Activated T-helper 1 cell treated with anti-CD3 and anti-CD28 coated beads, Interleukin-12 subunit alpha, Interleukin-12 subunit beta, Interleukin-2, Interleukin-4 antibody, amounts not matched to agents 30 ng/mL and 10 ng/mL and 1 ng/mL, durations not matched to agents 14 hours and 24 hours and 36 hours (primary cell): ENCODE measurements at regions of chr5 and their contacts with region 1.

Region 1: GRCh38 chr5:10353241-10354047 is at the start of gene MARCHF6:
- DNase-seq: peak; percentile 89
- H3K4me3 Mint-ChIP-seq: peak within 1 kb of the TSS; percentile 100
- H3K27ac Mint-ChIP-seq: peak within 1 kb of the TSS; percentile 100
- H3K4me1 Mint-ChIP-seq: peaks cover 48% of the 10 kb centered on the region
- H3K27me3 Mint-ChIP-seq: no peaks in the 10 kb centered on the region
- total RNA-seq, gene MARCHF6: 98.8 and 109 TPM in 2 replicates

Region 2: GRCh38 chr5:10124287-10124686 is 229.2 kb before region 1 on chr5:
- intact Hi-C with region 1: no loop called
- DNase-seq: no peak
- H3K4me3 Mint-ChIP-seq: no peak overlapping the region
- H3K27ac Mint-ChIP-seq: no peak overlapping the region
- H3K4me1 Mint-ChIP-seq: no peaks in the 10 kb centered on the region
- H3K27me3 Mint-ChIP-seq: no peaks in the 10 kb centered on the region

Region 3: DNA sequence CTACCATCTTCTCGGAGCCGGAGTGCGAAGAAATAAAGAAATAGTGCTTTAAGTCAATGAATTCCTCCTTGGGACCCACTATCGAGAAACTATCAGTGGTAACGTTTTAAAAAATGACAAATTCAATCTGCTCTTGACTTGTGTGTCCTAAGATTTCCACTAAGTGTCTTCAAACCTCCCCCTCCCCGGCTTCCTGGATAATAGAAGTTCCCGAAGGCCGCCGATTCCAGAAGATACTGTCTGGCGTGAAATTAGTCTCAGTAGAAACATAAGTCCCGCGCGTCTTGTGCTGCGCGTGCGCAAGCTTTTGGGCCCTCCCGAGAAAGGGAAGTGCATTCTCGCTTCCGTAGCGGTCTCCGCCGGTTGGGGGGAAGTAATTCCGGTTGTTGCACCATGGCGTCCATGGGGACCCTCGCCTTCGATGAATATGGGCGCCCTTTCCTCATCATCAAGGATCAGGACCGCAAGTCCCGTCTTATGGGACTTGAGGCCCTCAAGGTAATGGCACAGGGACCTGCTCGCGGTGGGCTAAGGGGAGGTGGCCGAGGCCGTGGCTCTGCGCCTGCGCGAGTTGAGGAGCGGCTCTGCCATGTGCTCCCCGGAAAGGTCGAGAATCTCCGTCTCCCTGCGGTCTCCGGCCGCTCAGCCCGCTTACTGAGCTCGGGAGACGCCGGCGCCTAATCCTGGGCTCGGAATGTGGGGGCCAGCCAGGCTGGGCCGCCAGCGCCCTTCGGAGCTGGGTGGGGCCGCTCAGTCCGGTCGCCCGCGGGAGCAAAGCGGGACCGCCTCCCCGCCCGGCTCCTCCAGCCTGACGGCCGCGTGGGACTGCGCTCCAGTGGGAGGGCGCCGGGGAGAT is 103.3 kb before region 1 on chr5 and contains the start of gene CCT5:
- intact Hi-C with region 1: loop called (anchors 1 kb)
- DNase-seq: peak; percentile 89
- H3K4me3 Mint-ChIP-seq: peak within 1 kb of the TSS; percentile 91
- H3K27ac Mint-ChIP-seq: peak within 1 kb of the TSS; percentile 100
- H3K4me1 Mint-ChIP-seq: peaks cover 53% of the 10 kb centered on the region
- H3K27me3 Mint-ChIP-seq: no peaks in the 10 kb centered on the region
- total RNA-seq, gene CCT5: 511 and 512 TPM in 2 replicates

Region 4: GRCh38 chr5:10364186-10364683 is 10.8 kb after region 1 on chr5:
- intact Hi-C with region 1: loop called (anchors 2 kb)
- DNase-seq: no peak
- H3K4me3 Mint-ChIP-seq: no peak overlapping the region
- H3K27ac Mint-ChIP-seq: no peak overlapping the region
- H3K4me1 Mint-ChIP-seq: peaks cover 39% of the 10 kb centered on the region
- H3K27me3 Mint-ChIP-seq: no peaks in the 10 kb centered on the region

Region 5: DNA sequence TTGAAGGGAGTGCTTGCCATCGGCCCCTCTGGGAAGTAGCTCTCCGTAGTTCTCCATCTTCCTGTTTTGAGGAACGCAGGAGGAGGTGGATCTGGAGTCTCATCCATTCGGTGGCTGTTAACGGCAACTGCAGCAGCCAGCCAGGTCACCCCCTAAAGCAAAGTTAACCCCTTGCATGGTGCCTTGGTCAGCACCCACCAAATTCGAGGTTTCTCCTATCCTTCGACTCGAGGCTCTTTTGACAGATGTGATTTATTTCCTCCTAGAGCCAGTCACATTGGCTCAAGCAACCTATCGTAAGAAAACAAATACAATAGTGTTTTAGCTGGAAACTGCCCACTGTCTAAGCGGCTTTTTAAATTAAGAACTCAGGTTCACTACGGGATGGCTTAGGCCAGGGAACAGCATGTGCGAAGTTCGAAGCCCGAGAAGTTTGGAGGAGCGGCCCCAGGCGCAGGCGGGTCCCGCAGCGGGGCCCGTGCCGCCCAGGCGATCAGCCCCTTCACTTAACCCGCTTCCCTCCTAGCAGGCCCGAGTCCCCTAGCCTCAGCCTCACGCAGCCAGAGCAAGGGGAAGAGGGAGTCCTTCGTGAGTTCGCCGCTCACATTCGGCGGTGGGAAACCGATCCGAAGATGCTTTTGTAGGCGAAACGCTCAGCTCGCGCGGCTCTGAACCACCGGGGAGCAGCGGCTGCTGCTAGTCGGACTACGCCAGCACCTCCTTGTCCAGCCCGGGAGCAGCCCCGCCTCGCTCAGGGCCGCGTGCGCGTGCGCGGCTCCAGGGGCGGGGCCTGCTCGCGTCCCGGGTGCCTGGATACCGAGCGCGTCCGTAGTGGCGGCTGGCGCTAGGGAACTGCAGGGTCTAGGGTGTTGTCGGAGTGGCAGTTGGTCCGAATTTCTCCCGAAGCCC is 87.9 kb after region 1 on chr5 and contains the start of gene ROPN1L:
- intact Hi-C with region 1: loop called (anchors 1 kb)
- DNase-seq: peak; percentile 80
- H3K4me3 Mint-ChIP-seq: peak within 1 kb of the TSS; percentile 85
- H3K27ac Mint-ChIP-seq: no peak within 1 kb of the TSS
- H3K4me1 Mint-ChIP-seq: peaks cover 35% of the 10 kb centered on the region
- H3K27me3 Mint-ChIP-seq: peaks cover 2% of the 10 kb centered on the region
- total RNA-seq, gene ROPN1L: 0.16 and 0.20 TPM in 2 replicates

Region 6: DNA sequence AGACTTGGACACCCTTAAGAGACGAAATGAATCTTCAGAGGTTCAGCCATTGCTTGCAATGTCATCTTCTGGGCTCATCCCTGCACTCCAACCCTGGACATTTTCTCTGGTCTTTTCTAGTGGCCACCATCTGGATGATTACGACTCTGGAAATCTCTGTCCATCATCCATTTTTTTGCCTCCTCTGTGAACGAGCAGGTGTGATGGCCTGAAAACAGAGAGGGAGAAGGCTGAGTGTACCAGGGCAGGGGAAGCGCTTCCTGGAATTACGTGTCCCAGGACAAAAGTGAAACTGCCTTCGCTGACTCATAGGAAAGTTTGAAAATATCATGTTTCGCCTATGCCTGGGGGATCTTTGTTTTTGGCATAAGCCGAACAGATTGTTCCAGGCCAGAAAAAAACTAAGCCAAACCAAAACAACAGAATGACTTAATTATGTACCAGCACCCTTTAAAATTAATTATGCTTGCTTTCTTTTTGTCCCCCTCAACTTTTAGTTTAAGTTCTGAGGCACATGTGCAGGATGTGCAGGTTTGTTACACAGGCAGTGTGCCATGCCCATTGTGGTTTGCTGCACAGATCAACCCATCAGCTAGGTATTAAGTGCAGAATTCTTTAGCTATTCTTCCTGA is 242.3 kb after region 1 on chr5:
- intact Hi-C with region 1: loop called (anchors 2 kb)
- DNase-seq: peak; percentile 54
- H3K4me3 Mint-ChIP-seq: peak overlapping the region; percentile 9
- H3K27ac Mint-ChIP-seq: peak overlapping the region; percentile 44
- H3K4me1 Mint-ChIP-seq: peaks cover 77% of the 10 kb centered on the region
- H3K27me3 Mint-ChIP-seq: peaks cover 4% of the 10 kb centered on the region

Region 7: GRCh38 chr5:10645146-10645545 is 291.7 kb after region 1 on chr5:
- intact Hi-C with region 1: no loop called
- DNase-seq: no peak
- H3K4me3 Mint-ChIP-seq: no peak overlapping the region
- H3K27ac Mint-ChIP-seq: no peak overlapping the region
- H3K4me1 Mint-ChIP-seq: peaks cover 31% of the 10 kb centered on the region
- H3K27me3 Mint-ChIP-seq: no peaks in the 10 kb centered on the region

Region 8: GRCh38 chr5:10761166-10761932 is 407.9 kb after region 1 on chr5 and contains the start of gene DAP:
- intact Hi-C with region 1: loop called (anchors 2 kb)
- DNase-seq: peak; percentile 91
- H3K4me3 Mint-ChIP-seq: peak within 1 kb of the TSS; percentile 93
- H3K27ac Mint-ChIP-seq: peak within 1 kb of the TSS; percentile 89
- H3K4me1 Mint-ChIP-seq: peaks cover 50% of the 10 kb centered on the region
- H3K27me3 Mint-ChIP-seq: peaks cover 9% of the 10 kb centered on the region
- total RNA-seq, gene DAP: 62.6 and 64.7 TPM in 2 replicates